CD8-positive, alpha-beta memory T cell (primary cell): ENCODE measurements at regions of chr2 and their contacts with region 1.

Region 1: GRCh38 chr2:9984217-9984739 is 32.8 kb downstream of the GRHL1 start:
- DNase-seq: peak in 2 of 5 donors; percentile 51 to 54
- H3K4me3 ChIP-seq: no peak overlapping the region
- H3K4me3 Mint-ChIP-seq: no peak overlapping the region
- H3K27ac ChIP-seq: no peak overlapping the region
- H3K27ac Mint-ChIP-seq: no peak overlapping the region
- H3K4me1 ChIP-seq: peaks cover 7% of the 10 kb centered on the region
- H3K4me1 Mint-ChIP-seq: peaks cover 8 to 16% (median 10%) of the 10 kb centered on the region in 3 donors
- H3K27me3 ChIP-seq: no peaks in the 10 kb centered on the region
- H3K27me3 Mint-ChIP-seq: peaks cover 3 to 8% of the 10 kb centered on the region in 2 donors

Region 2: GRCh38 chr2:9998916-9999654 is 14.8 kb after region 1 on chr2:
- CTCF ChIA-PET with region 1: interaction called, 22 read pairs
- POLR2A ChIA-PET with region 1: no interaction called
- DNase-seq: no peak
- H3K4me3 ChIP-seq: no peak overlapping the region
- H3K4me3 Mint-ChIP-seq: no peak overlapping the region
- H3K27ac ChIP-seq: no peak overlapping the region
- H3K27ac Mint-ChIP-seq: peak overlapping the region in 1 of 8 donors; percentile 2
- H3K4me1 ChIP-seq: no peaks in the 10 kb centered on the region
- H3K4me1 Mint-ChIP-seq: no peaks in the 10 kb centered on the region
- H3K27me3 ChIP-seq: no peaks in the 10 kb centered on the region
- H3K27me3 Mint-ChIP-seq: peaks cover 0 to under 1% of the 10 kb centered on the region in 2 donors

Region 3: DNA sequence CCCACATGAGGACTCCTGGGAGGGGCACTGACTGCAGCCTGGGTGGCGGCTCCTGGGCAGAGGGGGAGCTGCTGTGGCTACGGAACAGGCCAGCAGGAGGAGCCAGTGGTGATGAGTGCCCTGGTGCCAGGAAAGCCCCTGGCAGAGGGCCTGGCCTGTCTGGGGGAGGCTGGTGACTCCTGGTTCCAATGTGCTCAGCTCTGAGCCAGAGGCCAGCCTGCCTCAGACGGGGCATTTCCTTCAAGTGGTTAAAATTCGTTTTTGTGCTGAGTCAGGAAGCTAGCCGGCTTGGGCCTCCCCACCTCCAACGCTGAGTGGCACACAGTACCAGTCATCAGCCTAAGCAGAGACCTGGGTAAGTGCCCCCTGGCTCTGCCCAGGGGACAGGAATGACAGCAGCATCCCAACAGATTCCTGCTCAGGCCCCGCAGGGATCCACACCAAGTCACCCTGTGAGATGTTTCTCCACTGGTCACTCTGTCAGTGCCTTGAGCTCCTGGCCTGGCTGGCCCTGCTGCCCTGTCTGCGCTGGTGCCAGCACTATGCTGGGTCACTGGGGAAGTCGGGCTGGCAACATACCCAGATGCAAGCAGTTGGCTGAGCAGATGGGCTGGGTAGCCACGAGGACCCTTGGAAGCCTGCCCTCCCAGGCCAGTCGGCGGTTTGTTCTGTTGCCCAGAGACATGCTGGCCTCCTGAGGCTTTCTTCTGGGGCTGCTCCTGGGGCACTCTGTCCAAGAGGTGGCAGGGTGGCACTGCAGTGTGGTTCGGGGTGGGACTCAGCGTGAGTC is 52.0 kb after region 1 on chr2:
- CTCF ChIA-PET with region 1: interaction called, 12 read pairs
- POLR2A ChIA-PET with region 1: no interaction called
- DNase-seq: peak; percentile 26 to 52 (median 28)
- H3K4me3 ChIP-seq: no peak overlapping the region
- H3K4me3 Mint-ChIP-seq: no peak overlapping the region
- H3K27ac ChIP-seq: no peak overlapping the region
- H3K27ac Mint-ChIP-seq: peak overlapping the region in 2 of 8 donors; percentile 12 to 47
- H3K4me1 ChIP-seq: peaks cover 4% of the 10 kb centered on the region
- H3K4me1 Mint-ChIP-seq: peaks cover 17 to 20% (median 19%) of the 10 kb centered on the region in 3 donors
- H3K27me3 ChIP-seq: no peaks in the 10 kb centered on the region
- H3K27me3 Mint-ChIP-seq: peaks cover 0 to 1% of the 10 kb centered on the region in 2 donors

Region 4: DNA sequence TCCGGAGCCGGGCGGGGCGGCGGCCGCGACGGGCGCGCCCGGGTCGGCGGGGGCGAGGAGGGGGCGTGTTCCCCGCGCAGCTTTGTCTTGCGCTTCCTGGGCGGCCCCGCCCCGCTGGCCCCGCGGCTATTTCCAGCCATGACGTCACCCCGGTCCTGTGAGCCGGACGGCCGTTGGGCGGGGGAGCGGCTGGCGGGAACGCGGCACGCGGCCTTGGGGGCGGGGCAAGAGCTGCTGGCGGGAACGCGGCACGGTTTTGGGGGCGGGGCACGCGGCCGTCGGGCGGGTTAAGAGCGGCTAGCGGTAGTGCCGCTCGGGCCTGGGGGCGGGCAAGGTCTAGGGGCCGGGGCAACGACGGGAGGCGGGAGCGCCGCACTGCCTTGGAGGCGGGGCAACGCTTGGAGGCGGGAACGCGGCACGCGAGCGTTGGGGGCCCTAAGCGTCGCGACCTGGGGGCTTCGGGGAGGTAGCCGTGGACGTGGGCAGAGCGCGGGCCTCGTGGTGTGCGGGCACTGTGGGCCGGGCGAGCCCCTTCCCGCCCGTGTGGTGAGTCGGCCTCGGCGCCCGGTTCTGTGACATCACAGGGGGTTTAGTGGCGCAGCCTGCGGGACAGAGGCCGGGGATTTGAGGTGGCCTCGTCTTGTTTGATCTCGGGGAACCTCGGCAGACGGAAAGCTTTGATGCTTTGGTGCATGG is 59.8 kb after region 1 on chr2:
- CTCF ChIA-PET with region 1: interaction called, 201 read pairs
- POLR2A ChIA-PET with region 1: interaction called, 10 read pairs
- DNase-seq: peak; percentile 90 to 96 (median 94)
- H3K4me3 ChIP-seq: peak overlapping the region; percentile 50
- H3K4me3 Mint-ChIP-seq: peak overlapping the region; percentile 78 to 85 (median 83)
- H3K27ac ChIP-seq: peak overlapping the region; percentile 69
- H3K27ac Mint-ChIP-seq: peak overlapping the region; percentile 88 to 98 (median 96)
- H3K4me1 ChIP-seq: peaks cover 17% of the 10 kb centered on the region
- H3K4me1 Mint-ChIP-seq: peaks cover 28 to 53% (median 31%) of the 10 kb centered on the region in 3 donors
- H3K27me3 ChIP-seq: no peaks in the 10 kb centered on the region
- H3K27me3 Mint-ChIP-seq: peaks cover 0 to 6% of the 10 kb centered on the region in 2 donors

Region 5: DNA sequence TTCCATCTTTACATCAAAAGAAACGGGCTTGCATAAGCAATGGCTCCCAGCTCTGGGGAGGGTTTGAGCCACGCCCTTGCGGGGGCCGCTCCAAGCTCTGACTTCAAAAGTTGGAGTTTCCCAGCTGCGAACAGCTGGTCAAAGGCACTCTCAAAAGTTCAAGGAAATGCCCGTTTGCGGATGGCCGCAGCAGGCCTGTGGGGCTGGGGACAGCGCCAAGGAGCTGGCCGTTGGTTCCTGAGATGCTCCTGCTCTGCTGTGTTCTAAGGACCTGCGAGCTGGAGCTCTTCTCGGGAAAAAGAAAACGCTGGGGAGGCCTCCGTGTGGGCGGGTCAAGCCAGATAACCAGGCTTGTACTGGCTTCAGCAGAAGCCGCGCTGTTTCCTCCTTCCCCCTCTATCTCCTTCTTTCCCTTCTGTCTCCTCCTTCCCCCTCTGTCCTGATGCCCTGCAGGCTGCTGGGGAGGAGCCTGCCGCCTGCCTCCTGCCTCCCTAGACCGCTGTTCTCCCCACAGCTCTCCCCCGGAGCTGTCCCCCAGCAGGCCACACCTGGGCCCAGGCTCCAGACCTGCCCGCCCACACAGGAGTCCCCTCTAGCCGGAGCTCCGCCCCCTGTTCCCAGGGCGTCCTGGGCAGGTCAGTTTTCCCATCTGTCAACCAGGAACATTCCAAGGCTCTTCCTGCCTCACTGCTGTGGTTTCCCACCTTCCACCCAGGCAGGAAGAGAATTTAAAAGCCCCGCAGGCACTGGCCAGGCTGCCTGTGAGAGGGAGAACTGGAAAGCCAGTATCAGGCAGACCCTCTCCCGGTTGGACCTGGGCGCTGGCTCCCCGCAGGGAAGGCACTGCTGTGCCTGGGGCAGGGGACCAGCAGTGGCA is 73.2 kb after region 1 on chr2:
- CTCF ChIA-PET with region 1: interaction called, 201 read pairs
- POLR2A ChIA-PET with region 1: interaction called, 3 read pairs
- DNase-seq: no peak
- H3K4me3 ChIP-seq: no peak overlapping the region
- H3K4me3 Mint-ChIP-seq: no peak overlapping the region
- H3K27ac ChIP-seq: no peak overlapping the region
- H3K27ac Mint-ChIP-seq: no peak overlapping the region
- H3K4me1 ChIP-seq: no peaks in the 10 kb centered on the region
- H3K4me1 Mint-ChIP-seq: peaks cover 0 to 6% (median 0%) of the 10 kb centered on the region in 3 donors
- H3K27me3 ChIP-seq: no peaks in the 10 kb centered on the region
- H3K27me3 Mint-ChIP-seq: no peaks in the 10 kb centered on the region